ENCODE measurements at regions of chr4 and their contacts with region 1.

Region 1: DNA sequence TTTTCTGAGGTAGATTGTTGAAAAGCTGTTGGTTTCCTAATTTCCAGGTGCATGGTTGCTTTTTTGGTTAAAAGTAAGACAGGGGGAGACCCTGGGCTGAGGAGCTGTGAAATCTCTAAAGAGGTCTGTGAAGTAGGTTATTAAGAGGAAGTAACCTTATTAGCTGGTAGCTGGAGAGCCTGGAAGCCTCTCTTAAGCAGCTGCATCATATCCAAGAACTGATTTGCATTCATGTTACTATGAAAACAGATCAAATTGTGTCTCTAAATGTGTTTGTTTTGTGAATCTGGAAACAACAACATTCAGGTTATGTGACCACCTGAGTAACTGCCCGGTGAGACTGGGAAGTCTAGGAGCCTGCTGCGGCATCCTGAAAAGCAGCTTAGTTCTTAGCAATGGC is 54.1 kb downstream of the ARHGAP10 start:
- DNase-seq: no peak
- H3K4me3 ChIP-seq: no peak overlapping the region
- H3K27ac ChIP-seq: peak overlapping the region; percentile 34; the same call in 1 of the 2 replicates
- H3K4me1 ChIP-seq: peaks cover 74% of the 10 kb centered on the region
- H3K27me3 ChIP-seq: no peaks in the 10 kb centered on the region
- CTCF ChIP-seq: no peak

Region 2: DNA sequence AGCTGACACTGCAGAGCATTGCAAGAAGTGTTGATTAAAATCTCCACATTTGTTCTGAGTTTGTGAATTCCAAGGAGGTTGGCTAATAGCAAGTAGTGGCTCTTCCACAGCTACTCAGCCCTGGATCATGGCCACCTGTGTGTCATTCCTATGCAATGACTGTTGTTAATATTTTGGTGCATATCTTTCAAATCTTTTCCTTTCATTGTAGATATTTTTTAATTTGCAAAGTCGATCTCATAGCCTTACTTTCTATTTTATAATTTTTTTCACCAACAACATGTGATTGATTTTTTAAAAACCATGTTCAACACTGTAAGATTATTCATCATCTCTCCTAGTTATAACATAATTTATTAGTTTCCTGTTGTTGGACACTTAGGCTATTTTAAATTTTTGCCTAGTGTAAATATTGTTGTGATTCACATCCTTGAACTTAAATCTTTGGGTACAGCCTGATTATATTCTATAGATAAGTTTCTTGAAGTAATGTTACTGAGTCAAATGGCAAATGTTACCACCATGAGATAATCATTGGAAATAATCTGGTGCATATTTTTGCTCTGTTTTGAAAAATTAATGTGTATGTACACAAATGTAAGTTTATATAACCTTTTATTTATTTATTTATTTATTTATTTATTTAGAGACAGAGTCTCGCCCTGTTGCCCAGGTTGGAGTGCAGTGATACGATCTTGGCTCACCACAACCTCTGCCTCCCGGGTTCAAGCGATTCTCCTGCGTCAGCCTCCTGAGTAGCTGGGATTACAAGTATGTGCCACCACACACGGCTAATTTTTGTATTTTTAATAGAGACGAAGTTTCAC is 71.2 kb before region 1 on chr4:
- CTCF ChIA-PET with region 1: no interaction called
- POLR2A ChIA-PET with region 1: no interaction called
- intact Hi-C with region 1: loop called (anchors 2 kb)
- DNase-seq: peak; percentile 58 to 92
- H3K4me3 ChIP-seq: peak overlapping the region; percentile 39; the same call in 1 of the 2 replicates
- H3K27ac ChIP-seq: peak overlapping the region; percentile 64
- H3K4me1 ChIP-seq: peaks cover 21% of the 10 kb centered on the region
- H3K27me3 ChIP-seq: no peaks in the 10 kb centered on the region
- CTCF ChIP-seq: no peak

Region 3: GRCh38 chr4:147741190-147741785 is 44.7 kb before region 1 on chr4:
- CTCF ChIA-PET with region 1: no interaction called
- POLR2A ChIA-PET with region 1: no interaction called
- intact Hi-C with region 1: loop called (anchors 2 kb)
- DNase-seq: peak; percentile 33 to 61
- H3K4me3 ChIP-seq: no peak overlapping the region
- H3K27ac ChIP-seq: peak overlapping the region; percentile 53; the same call in 1 of the 2 replicates
- H3K4me1 ChIP-seq: peaks cover 22% of the 10 kb centered on the region
- H3K27me3 ChIP-seq: no peaks in the 10 kb centered on the region
- CTCF ChIP-seq: no peak

Region 4: DNA sequence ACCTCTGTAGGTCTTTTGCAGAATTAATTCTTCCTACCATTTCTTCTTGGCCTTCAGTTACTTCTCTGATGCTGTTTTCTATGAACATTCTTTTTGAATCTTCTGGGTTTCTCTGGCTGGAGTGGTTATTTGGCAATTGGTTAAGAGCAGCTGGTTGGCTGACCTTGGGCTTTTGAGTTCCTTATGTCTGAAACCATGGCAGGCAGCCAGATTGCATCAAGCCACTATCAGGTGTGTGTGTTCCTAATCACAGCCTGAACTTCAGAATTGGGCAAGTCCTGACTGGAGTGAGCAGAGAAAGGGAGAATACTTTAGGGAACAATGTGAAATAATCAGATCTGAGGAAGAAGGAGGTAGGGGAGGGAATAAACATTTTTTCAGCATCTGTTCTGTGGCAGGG is 36.1 kb after region 1 on chr4:
- CTCF ChIA-PET with region 1: interaction called, 5 read pairs
- POLR2A ChIA-PET with region 1: interaction called, 13 read pairs
- intact Hi-C with region 1: no loop called
- DNase-seq: peak; percentile 37 to 54
- H3K4me3 ChIP-seq: no peak overlapping the region
- H3K27ac ChIP-seq: no peak overlapping the region
- H3K4me1 ChIP-seq: peaks cover 10% of the 10 kb centered on the region; the same call in 1 of the 2 replicates
- H3K27me3 ChIP-seq: no peaks in the 10 kb centered on the region
- CTCF ChIP-seq: no peak

Region 5: DNA sequence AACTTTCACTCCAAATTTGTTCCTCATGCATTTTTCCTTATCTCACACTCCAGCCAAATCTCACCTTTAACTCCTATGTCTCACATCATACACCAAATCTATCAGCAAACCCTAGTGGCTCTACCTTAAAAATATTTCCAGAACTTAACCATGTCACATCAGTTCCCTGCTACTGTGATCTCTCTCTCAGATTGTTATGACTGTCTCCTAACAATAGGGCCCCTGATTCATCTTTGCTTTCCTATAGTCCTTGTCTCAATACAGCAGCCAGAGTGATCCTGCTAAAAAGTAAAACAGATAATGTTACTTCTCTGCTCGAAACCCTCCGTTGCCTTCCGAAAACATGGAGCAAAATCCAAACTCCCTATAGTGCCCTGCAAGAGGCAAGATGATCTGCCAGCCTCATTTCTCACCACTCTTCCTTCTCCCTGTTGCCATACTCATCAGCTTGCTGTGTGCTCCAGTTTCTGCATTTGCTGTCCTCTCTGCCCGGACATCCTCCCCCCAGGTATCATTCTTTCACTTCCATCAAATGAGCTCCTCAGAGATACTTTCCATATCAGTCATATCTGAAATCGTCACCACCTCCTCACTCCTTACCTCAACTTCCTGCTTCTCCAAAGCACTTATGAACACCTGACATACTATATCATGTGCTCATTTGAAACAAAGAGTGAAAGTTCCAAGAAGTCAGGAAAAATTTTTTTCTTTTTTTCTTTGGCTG is 949.6 kb after region 1 on chr4:
- CTCF ChIA-PET with region 1: no interaction called
- POLR2A ChIA-PET with region 1: no interaction called
- intact Hi-C with region 1: no loop called
- DNase-seq: no peak
- H3K4me3 ChIP-seq: no peak overlapping the region
- H3K27ac ChIP-seq: no peak overlapping the region
- H3K4me1 ChIP-seq: no peaks in the 10 kb centered on the region
- H3K27me3 ChIP-seq: no peaks in the 10 kb centered on the region
- CTCF ChIP-seq: no peak